Activated CD4-positive, alpha-beta memory T cell treated with anti-CD3 and anti-CD28 coated beads for 36 hours (primary cell): ENCODE measurements at regions of chr2 and their contacts with region 1.

Region 1: GRCh38 chr2:222912117-222912516 is 51.3 kb downstream of the ACSL3 start:
- DNase-seq: no peak
- H3K4me3 Mint-ChIP-seq: no peak overlapping the region
- H3K27ac Mint-ChIP-seq: no peak overlapping the region
- H3K4me1 Mint-ChIP-seq: peaks cover 8% of the 10 kb centered on the region
- H3K27me3 Mint-ChIP-seq: no peaks in the 10 kb centered on the region

Region 2: DNA sequence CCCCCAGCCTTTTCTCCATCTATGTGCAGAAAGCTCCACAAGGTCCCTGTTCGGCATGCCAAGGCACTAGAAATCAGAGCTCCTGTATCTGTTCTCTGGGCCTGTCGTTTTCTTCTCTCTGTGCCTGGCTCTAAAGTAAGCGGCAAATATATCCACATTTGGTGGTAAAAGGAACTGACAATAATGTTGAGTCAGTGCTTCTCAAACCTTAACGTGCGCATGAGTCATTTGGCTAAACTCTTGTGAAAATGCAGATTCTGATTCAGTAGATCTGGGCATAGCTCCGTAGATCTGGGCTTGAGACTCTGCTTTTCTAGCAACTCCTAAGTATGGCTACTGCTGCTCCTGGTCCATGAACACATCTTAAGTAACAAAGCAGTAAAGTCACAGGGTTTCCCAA is 67.8 kb before region 1 on chr2:
- CTCF ChIA-PET with region 1: no interaction called
- POLR2A ChIA-PET with region 1: no interaction called
- intact Hi-C with region 1: no loop called
- DNase-seq: no peak
- H3K4me3 Mint-ChIP-seq: no peak overlapping the region
- H3K27ac Mint-ChIP-seq: no peak overlapping the region
- H3K4me1 Mint-ChIP-seq: peaks cover 2% of the 10 kb centered on the region
- H3K27me3 Mint-ChIP-seq: peaks cover 24% of the 10 kb centered on the region

Region 3: GRCh38 chr2:222892321-222892720 is 19.8 kb before region 1 on chr2:
- CTCF ChIA-PET with region 1: no interaction called
- POLR2A ChIA-PET with region 1: no interaction called
- intact Hi-C with region 1: no loop called
- DNase-seq: no peak
- H3K4me3 Mint-ChIP-seq: no peak overlapping the region
- H3K27ac Mint-ChIP-seq: no peak overlapping the region
- H3K4me1 Mint-ChIP-seq: peaks cover 11% of the 10 kb centered on the region
- H3K27me3 Mint-ChIP-seq: no peaks in the 10 kb centered on the region

Region 4: GRCh38 chr2:222939208-222939856 is 27.2 kb after region 1 on chr2:
- CTCF ChIA-PET with region 1: interaction called, 10 read pairs
- POLR2A ChIA-PET with region 1: no interaction called
- intact Hi-C with region 1: no loop called
- DNase-seq: peak; percentile 74
- H3K4me3 Mint-ChIP-seq: no peak overlapping the region
- H3K27ac Mint-ChIP-seq: no peak overlapping the region
- H3K4me1 Mint-ChIP-seq: peaks cover 11% of the 10 kb centered on the region
- H3K27me3 Mint-ChIP-seq: no peaks in the 10 kb centered on the region